ENCODE measurements at regions of chr5 and their contacts with region 1.

Region 1: DNA sequence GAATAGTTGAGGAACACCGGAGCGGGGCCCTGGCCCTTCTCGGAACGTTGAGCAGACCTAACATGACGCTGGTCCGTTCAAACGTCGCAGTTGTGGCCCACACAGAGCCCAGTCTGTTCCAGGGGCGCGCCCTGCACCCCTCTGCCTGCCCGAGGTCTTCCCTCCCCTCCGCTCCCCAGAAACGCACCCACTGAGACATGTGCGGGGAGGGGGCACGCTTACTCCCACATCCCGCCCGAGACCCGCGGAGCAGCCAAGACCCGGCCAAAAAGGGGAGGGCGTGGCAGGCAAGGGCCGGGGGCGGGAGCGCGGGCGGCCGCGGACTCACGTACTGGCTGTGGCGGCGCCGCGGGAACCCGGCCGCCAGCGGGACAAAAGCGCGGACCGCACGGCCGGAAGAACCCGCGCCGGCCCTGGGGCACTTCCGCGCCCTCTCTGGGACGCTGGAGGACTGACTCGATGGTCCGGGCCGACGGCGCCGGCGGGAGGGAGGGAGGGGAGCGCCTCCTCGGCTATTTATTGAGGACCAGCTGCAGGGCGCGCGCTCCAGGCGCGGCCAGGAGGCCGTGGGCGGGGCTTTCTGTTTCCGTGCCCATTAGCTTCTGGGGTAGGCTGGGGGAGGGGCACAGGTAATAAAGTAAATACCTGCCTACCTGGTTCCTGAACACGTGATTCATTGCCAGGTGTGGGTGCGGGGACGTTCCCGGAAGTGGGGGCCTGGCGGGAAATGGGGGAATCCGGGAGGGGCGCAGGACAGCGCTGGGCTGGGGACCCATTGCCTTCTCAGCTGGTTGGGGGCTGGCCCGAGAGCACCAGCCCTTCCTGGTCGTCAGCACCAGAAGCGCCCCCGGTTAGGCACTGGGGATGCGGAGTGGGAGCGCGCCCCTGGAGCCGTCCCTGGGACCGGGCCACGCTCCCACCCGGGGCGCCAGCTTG is at the start of gene ZFP62:
- DNase-seq: peak; percentile 91
- ATAC-seq: peak; percentile 87
- H3K4me3 Mint-ChIP-seq: peak within 1 kb of the TSS; percentile 92
- H3K27ac Mint-ChIP-seq: peak within 1 kb of the TSS; percentile 89
- H3K4me1 Mint-ChIP-seq: peaks cover 18% of the 10 kb centered on the region
- H3K27me3 Mint-ChIP-seq: peaks cover 1% of the 10 kb centered on the region
- CTCF ChIP-seq: peak; percentile 13
- total RNA-seq, gene ZFP62: 22.2 to 22.6 TPM

Region 2: GRCh38 chr5:180810210-180810958 is 50.8 kb before region 1 on chr5:
- CTCF ChIA-PET with region 1: interaction called, 3 read pairs
- POLR2A ChIA-PET with region 1: no interaction called
- intact Hi-C with region 1: loop called (anchors 5 kb)
- DNase-seq: peak; percentile 95
- ATAC-seq: peak; percentile 83
- H3K4me3 Mint-ChIP-seq: peak overlapping the region; percentile 88
- H3K27ac Mint-ChIP-seq: peak overlapping the region; percentile 99
- H3K4me1 Mint-ChIP-seq: peaks cover 57% of the 10 kb centered on the region
- H3K27me3 Mint-ChIP-seq: no peaks in the 10 kb centered on the region
- CTCF ChIP-seq: no peak

Measured in activated CD8-positive, alpha-beta T cell treated with anti-CD3 and anti-CD28 coated beads for 36 hours (primary cell).